Right cardiac atrium (tissue), 5 donors: ENCODE measurements at regions of chr4 and their contacts with region 1.

Region 1: GRCh38 chr4:77465271-77465670 is 140.3 kb upstream of the CXCL13 start:
- DNase-seq: no peak
- ATAC-seq: peak; percentile 38 to 43
- H3K4me3 ChIP-seq: no peak overlapping the region
- H3K27ac ChIP-seq: no peak overlapping the region
- H3K4me1 ChIP-seq: no peaks in the 10 kb centered on the region
- H3K27me3 ChIP-seq: no peaks in the 10 kb centered on the region

Region 2: GRCh38 chr4:77418333-77419038 is 46.8 kb before region 1 on chr4:
- intact Hi-C with region 1: no loop called
- DNase-seq: no peak
- ATAC-seq: no peak
- H3K4me3 ChIP-seq: no peak overlapping the region
- H3K27ac ChIP-seq: no peak overlapping the region
- H3K4me1 ChIP-seq: no peaks in the 10 kb centered on the region
- H3K27me3 ChIP-seq: no peaks in the 10 kb centered on the region

Region 3: GRCh38 chr4:77600521-77601451 is 135.5 kb after region 1 on chr4:
- intact Hi-C with region 1: loop called in 1 of 4 experiments (anchors 10 kb)
- DNase-seq: no peak
- ATAC-seq: no peak
- H3K4me3 ChIP-seq: no peak overlapping the region
- H3K27ac ChIP-seq: no peak overlapping the region
- H3K4me1 ChIP-seq: no peaks in the 10 kb centered on the region
- H3K27me3 ChIP-seq: no peaks in the 10 kb centered on the region